ENCODE measurements at regions of chr7 and their contacts with region 1.

Region 1: GRCh38 chr7:7681179-7681935 is 37.0 kb downstream of the RPA3 start:
- DNase-seq: no peak
- ATAC-seq: peak; percentile 50
- H3K4me3 Mint-ChIP-seq: no peak overlapping the region
- H3K27ac Mint-ChIP-seq: no peak overlapping the region
- H3K4me1 Mint-ChIP-seq: peaks cover 18% of the 10 kb centered on the region
- H3K27me3 Mint-ChIP-seq: no peaks in the 10 kb centered on the region; the same call in 1 of the 2 replicates
- CTCF ChIP-seq: no peak

Region 2: GRCh38 chr7:7696458-7697119 is 15.2 kb after region 1 on chr7:
- CTCF ChIA-PET with region 1: interaction called, 13 read pairs
- POLR2A ChIA-PET with region 1: no interaction called
- DNase-seq: no peak
- ATAC-seq: no peak
- H3K4me3 Mint-ChIP-seq: no peak overlapping the region
- H3K27ac Mint-ChIP-seq: no peak overlapping the region
- H3K4me1 Mint-ChIP-seq: no peaks in the 10 kb centered on the region
- H3K27me3 Mint-ChIP-seq: no peaks in the 10 kb centered on the region
- CTCF ChIP-seq: no peak

Region 3: GRCh38 chr7:7745258-7745657 is 63.9 kb after region 1 on chr7:
- CTCF ChIA-PET with region 1: no interaction called
- POLR2A ChIA-PET with region 1: no interaction called
- DNase-seq: no peak
- ATAC-seq: no peak
- H3K4me3 Mint-ChIP-seq: no peak overlapping the region
- H3K27ac Mint-ChIP-seq: no peak overlapping the region
- H3K4me1 Mint-ChIP-seq: peaks cover 10% of the 10 kb centered on the region
- H3K27me3 Mint-ChIP-seq: no peaks in the 10 kb centered on the region
- CTCF ChIP-seq: no peak

Region 4: GRCh38 chr7:8035647-8036518 is 354.5 kb after region 1 on chr7:
- CTCF ChIA-PET with region 1: interaction called, 21 read pairs
- POLR2A ChIA-PET with region 1: no interaction called
- DNase-seq: no peak
- ATAC-seq: peak; percentile 95
- H3K4me3 Mint-ChIP-seq: no peak overlapping the region
- H3K27ac Mint-ChIP-seq: no peak overlapping the region
- H3K4me1 Mint-ChIP-seq: peaks cover 31% of the 10 kb centered on the region
- H3K27me3 Mint-ChIP-seq: no peaks in the 10 kb centered on the region
- CTCF ChIP-seq: peak; percentile 37; the same call in 1 of the 2 replicates

Region 5: GRCh38 chr7:8190119-8190895 is 508.9 kb after region 1 on chr7:
- CTCF ChIA-PET with region 1: interaction called, 12 read pairs
- POLR2A ChIA-PET with region 1: no interaction called
- DNase-seq: peak; percentile 36
- ATAC-seq: peak; percentile 65
- H3K4me3 Mint-ChIP-seq: no peak overlapping the region
- H3K27ac Mint-ChIP-seq: peak overlapping the region; percentile 69
- H3K4me1 Mint-ChIP-seq: peaks cover 34% of the 10 kb centered on the region
- H3K27me3 Mint-ChIP-seq: no peaks in the 10 kb centered on the region
- CTCF ChIP-seq: 0 out of 2 replicates have a peak, but pooled peaks have one; percentile 18

Region 6: GRCh38 chr7:8214244-8214824 is 533.0 kb after region 1 on chr7:
- CTCF ChIA-PET with region 1: interaction called, 10 read pairs
- POLR2A ChIA-PET with region 1: no interaction called
- DNase-seq: no peak
- ATAC-seq: no peak
- H3K4me3 Mint-ChIP-seq: no peak overlapping the region
- H3K27ac Mint-ChIP-seq: no peak overlapping the region
- H3K4me1 Mint-ChIP-seq: peaks cover 57% of the 10 kb centered on the region
- H3K27me3 Mint-ChIP-seq: no peaks in the 10 kb centered on the region
- CTCF ChIP-seq: no peak

Measured in WTC11 (cell line).